ENCODE measurements at regions of chr3 and their contacts with region 1.

Region 1: GRCh38 chr3:23435318-23435717 is 232.2 kb downstream of the UBE2E2 start:
- DNase-seq: no peak
- ATAC-seq: no peak
- H3K4me3 Mint-ChIP-seq: no peak overlapping the region
- H3K27ac Mint-ChIP-seq: no peak overlapping the region
- H3K4me1 Mint-ChIP-seq: peaks cover 51% of the 10 kb centered on the region
- H3K27me3 Mint-ChIP-seq: no peaks in the 10 kb centered on the region
- CTCF ChIP-seq: no peak

Region 2: GRCh38 chr3:22620498-22620897 is 814.8 kb before region 1 on chr3:
- CTCF ChIA-PET with region 1: no interaction called
- POLR2A ChIA-PET with region 1: no interaction called
- intact Hi-C with region 1: no loop called
- DNase-seq: no peak
- ATAC-seq: no peak
- H3K4me3 Mint-ChIP-seq: no peak overlapping the region
- H3K27ac Mint-ChIP-seq: no peak overlapping the region
- H3K4me1 Mint-ChIP-seq: no peaks in the 10 kb centered on the region
- H3K27me3 Mint-ChIP-seq: no peaks in the 10 kb centered on the region
- CTCF ChIP-seq: no peak

Region 3: DNA sequence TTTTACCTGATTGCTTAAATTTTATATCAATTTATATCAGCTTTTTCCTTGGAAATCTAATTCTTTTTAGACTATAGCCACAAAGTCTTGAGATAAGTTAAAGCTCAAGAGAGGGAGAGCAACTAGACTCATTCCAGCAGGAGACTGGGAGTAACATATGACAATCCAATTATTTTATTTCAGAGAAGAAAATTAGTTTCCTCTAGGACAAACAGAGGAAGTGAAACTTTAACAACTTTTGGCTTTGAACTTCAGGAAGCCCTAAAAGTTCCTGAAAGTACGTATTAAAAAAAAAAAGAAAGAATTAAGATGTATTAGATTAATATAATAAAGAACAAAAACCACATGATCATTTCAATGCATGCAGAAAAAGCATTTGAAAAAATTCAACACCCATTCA is 246.1 kb before region 1 on chr3:
- CTCF ChIA-PET with region 1: no interaction called
- POLR2A ChIA-PET with region 1: no interaction called
- intact Hi-C with region 1: no loop called
- DNase-seq: no peak
- ATAC-seq: no peak
- H3K4me3 Mint-ChIP-seq: no peak overlapping the region
- H3K27ac Mint-ChIP-seq: no peak overlapping the region
- H3K4me1 Mint-ChIP-seq: peaks cover 2% of the 10 kb centered on the region
- H3K27me3 Mint-ChIP-seq: peaks cover 8% of the 10 kb centered on the region
- CTCF ChIP-seq: no peak

Region 4: GRCh38 chr3:23396746-23397145 is 38.6 kb before region 1 on chr3:
- CTCF ChIA-PET with region 1: no interaction called
- POLR2A ChIA-PET with region 1: no interaction called
- intact Hi-C with region 1: loop called (anchors 5 kb)
- DNase-seq: no peak
- ATAC-seq: no peak
- H3K4me3 Mint-ChIP-seq: no peak overlapping the region
- H3K27ac Mint-ChIP-seq: no peak overlapping the region
- H3K4me1 Mint-ChIP-seq: peaks cover 39% of the 10 kb centered on the region
- H3K27me3 Mint-ChIP-seq: no peaks in the 10 kb centered on the region
- CTCF ChIP-seq: no peak

Region 5: GRCh38 chr3:23421811-23422516 is 13.4 kb before region 1 on chr3:
- CTCF ChIA-PET with region 1: no interaction called
- POLR2A ChIA-PET with region 1: no interaction called
- intact Hi-C with region 1: no loop called
- DNase-seq: no peak
- ATAC-seq: no peak
- H3K4me3 Mint-ChIP-seq: no peak overlapping the region
- H3K27ac Mint-ChIP-seq: no peak overlapping the region
- H3K4me1 Mint-ChIP-seq: peaks cover 44% of the 10 kb centered on the region
- H3K27me3 Mint-ChIP-seq: no peaks in the 10 kb centered on the region
- CTCF ChIP-seq: no peak

Region 6: GRCh38 chr3:23448998-23449537 is 13.8 kb after region 1 on chr3:
- CTCF ChIA-PET with region 1: no interaction called
- POLR2A ChIA-PET with region 1: interaction called, 4 read pairs
- intact Hi-C with region 1: loop called (anchors 2 kb)
- DNase-seq: no peak
- ATAC-seq: no peak
- H3K4me3 Mint-ChIP-seq: no peak overlapping the region
- H3K27ac Mint-ChIP-seq: no peak overlapping the region
- H3K4me1 Mint-ChIP-seq: peaks cover 43% of the 10 kb centered on the region
- H3K27me3 Mint-ChIP-seq: no peaks in the 10 kb centered on the region
- CTCF ChIP-seq: no peak

Region 7: GRCh38 chr3:23537101-23537551 is 101.8 kb after region 1 on chr3:
- CTCF ChIA-PET with region 1: no interaction called
- POLR2A ChIA-PET with region 1: no interaction called
- intact Hi-C with region 1: no loop called
- DNase-seq: no peak
- ATAC-seq: no peak
- H3K4me3 Mint-ChIP-seq: no peak overlapping the region
- H3K27ac Mint-ChIP-seq: no peak overlapping the region
- H3K4me1 Mint-ChIP-seq: no peaks in the 10 kb centered on the region
- H3K27me3 Mint-ChIP-seq: no peaks in the 10 kb centered on the region
- CTCF ChIP-seq: no peak